ENCODE measurements at regions of chr12 and their contacts with region 1.

Region 1: DNA sequence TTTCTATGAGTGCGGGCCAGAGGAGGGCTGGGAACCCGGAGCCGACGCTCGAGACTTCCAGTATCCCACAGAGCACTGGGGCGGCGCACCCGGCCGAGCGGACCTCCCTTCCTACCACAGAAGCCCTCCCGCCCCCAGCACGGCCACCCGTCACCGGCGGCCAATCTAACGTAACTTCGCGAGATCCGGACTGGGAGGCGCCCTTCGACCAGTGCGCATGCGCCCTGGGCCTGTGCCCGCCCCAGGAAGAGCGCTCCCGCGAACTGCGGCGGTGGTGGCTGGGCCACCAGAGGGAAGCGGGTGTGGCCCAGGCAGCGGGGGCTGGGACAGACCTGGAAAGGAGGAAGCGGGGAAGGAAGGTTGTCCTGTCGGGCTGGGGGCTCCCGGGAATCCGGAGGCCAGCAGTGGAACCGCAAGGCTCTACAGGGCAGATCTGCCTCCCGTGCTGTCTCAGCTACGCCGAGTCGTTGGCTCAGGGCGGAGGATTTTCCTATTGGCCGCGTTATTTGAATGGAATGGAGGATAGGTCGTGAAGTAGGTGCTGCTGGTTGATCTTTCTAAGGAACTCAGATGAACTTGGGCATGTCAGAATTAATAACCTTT is at the start of gene PPP1R12A:
- DNase-seq: peak; percentile 98
- H3K4me3 ChIP-seq: peak within 1 kb of the TSS; percentile 81 to 96 (median 92)
- H3K27ac ChIP-seq: peak within 1 kb of the TSS; percentile 98 to 99 (median 99)
- H3K4me1 ChIP-seq: peaks cover 0 to 44% (median 26%) of the 10 kb centered on the region in 4 donors
- H3K27me3 ChIP-seq: no peaks in the 10 kb centered on the region
- CTCF ChIP-seq: peak in 2 of 4 experiments; percentile 22 to 31
- EP300 ChIP-seq: no peak
- POLR2A ChIP-seq: peak; percentile 99
- total RNA-seq, gene PPP1R12A: 326 to 528 (median 393) TPM

Region 2: GRCh38 chr12:79776111-79776510 is 159.0 kb before region 1 on chr12:
- intact Hi-C with region 1: loop called (anchors 5 kb)
- DNase-seq: no peak
- H3K4me3 ChIP-seq: no peak overlapping the region
- H3K27ac ChIP-seq: peak overlapping the region in 3 of 4 donors; percentile 4 to 40 (median 29)
- H3K4me1 ChIP-seq: peaks cover 0 to 24% (median 11%) of the 10 kb centered on the region in 4 donors
- H3K27me3 ChIP-seq: no peaks in the 10 kb centered on the region
- CTCF ChIP-seq: no peak
- EP300 ChIP-seq: no peak
- POLR2A ChIP-seq: no peak

Region 3: DNA sequence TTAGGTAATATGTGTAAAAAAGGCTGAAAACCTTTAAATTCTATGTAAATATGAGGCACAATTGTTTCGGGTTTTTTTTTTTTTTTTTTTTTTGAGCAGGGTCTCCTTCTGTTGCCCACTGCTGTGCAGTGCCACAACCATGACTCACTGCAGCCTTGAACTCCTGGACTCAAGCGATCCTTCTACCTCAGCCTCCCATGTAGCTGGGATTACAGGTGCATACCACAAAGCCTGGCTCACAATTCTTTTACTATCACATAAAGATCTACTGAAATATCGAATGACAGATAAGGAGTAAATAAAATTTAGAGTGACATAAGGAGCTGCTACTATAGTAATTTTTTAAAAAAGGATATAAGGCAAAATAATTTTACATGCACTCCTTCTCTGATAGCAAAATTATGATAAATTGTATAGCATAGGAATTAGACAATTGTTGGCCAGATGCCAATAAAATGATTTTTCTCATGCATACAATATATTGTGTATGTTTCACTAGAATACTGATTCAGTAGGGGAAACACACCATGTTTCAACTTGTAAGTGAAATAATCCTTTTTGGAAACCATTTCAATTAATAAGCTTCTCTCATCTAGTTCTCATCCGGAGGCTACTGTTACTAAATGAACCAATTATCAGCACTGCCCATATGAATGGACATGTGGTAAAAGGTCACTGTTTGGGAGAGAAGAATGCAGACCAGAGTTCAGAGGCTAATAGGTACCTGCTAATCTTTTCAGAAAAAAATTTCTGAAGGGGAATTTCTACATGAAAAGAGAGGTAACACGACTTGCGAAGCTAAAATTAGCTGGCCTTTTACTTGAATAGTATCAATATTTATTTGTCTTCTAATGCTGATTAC is 108.6 kb before region 1 on chr12:
- intact Hi-C with region 1: loop called (anchors 10 kb)
- DNase-seq: no peak
- H3K4me3 ChIP-seq: no peak overlapping the region
- H3K27ac ChIP-seq: no peak overlapping the region
- H3K4me1 ChIP-seq: peaks cover 0 to 72% (median 26%) of the 10 kb centered on the region in 4 donors
- H3K27me3 ChIP-seq: no peaks in the 10 kb centered on the region
- CTCF ChIP-seq: no peak
- EP300 ChIP-seq: no peak
- POLR2A ChIP-seq: no peak

Region 4: DNA sequence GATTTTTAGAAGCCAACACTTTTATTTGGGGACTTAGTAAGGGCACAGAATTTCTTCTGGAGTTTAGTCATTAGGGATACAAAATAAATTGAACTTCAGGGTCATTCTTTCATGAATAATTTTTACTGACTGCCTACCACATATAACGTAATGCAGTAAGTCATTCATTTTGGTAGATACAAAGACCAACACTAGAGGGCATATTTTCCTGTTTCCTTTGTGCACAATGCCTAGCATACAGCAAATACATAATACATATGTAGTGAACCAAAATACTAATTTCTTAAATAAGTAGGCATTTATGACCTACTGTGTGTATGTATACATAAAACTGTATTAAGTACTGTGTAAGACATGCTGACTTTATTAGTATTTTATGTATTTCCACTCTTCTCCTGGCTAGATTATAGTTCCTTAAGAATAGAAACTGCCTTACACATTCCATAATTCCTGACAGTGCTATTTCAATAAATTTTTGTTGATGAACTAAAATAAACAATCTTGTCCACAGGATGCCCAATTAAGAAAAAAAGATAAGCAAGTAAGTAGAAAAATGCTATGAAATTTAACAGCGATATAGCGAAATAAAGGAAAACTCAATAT is 48.1 kb before region 1 on chr12:
- intact Hi-C with region 1: loop called (anchors 5 kb)
- DNase-seq: no peak
- H3K4me3 ChIP-seq: no peak overlapping the region
- H3K27ac ChIP-seq: peak overlapping the region in 2 of 4 donors; percentile 36 to 49
- H3K4me1 ChIP-seq: peaks cover 0 to 97% (median 77%) of the 10 kb centered on the region in 4 donors
- H3K27me3 ChIP-seq: no peaks in the 10 kb centered on the region
- CTCF ChIP-seq: peak; percentile 22 to 47 (median 30)
- EP300 ChIP-seq: no peak
- POLR2A ChIP-seq: no peak

Region 5: DNA sequence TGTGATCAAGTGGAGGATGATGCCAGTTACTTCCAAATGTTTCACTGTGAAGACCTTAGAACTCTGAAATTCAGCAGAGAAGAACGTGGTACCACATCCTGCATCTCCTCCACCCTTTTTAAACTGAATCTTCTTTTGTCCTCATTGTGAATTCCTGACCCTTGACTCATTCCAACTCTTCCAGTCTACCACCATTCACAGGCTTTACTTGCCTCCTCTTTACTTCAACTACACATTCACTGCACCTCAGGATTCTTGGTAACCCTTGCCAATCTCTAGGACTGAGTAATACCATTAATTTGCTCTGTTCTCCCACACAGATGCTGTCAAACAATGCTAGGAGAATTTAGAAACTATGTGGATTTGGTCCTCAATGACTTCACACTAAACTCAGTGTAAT is 37.5 kb before region 1 on chr12:
- intact Hi-C with region 1: no loop called
- DNase-seq: no peak
- H3K4me3 ChIP-seq: no peak overlapping the region
- H3K27ac ChIP-seq: no peak overlapping the region
- H3K4me1 ChIP-seq: peaks cover 0 to 93% (median 71%) of the 10 kb centered on the region in 4 donors
- H3K27me3 ChIP-seq: no peaks in the 10 kb centered on the region
- CTCF ChIP-seq: no peak
- EP300 ChIP-seq: no peak
- POLR2A ChIP-seq: no peak

Region 6: GRCh38 chr12:80041692-80042091 is 106.6 kb after region 1 on chr12:
- intact Hi-C with region 1: loop called (anchors 2 kb)
- DNase-seq: no peak
- H3K4me3 ChIP-seq: no peak overlapping the region
- H3K27ac ChIP-seq: peak overlapping the region; percentile 72 to 81 (median 80)
- H3K4me1 ChIP-seq: peaks cover 0 to 64% (median 37%) of the 10 kb centered on the region in 4 donors
- H3K27me3 ChIP-seq: no peaks in the 10 kb centered on the region
- CTCF ChIP-seq: no peak
- EP300 ChIP-seq: no peak
- POLR2A ChIP-seq: no peak

Region 7: GRCh38 chr12:80262346-80262745 is 327.2 kb after region 1 on chr12:
- intact Hi-C with region 1: no loop called
- DNase-seq: no peak
- H3K4me3 ChIP-seq: no peak overlapping the region
- H3K27ac ChIP-seq: no peak overlapping the region
- H3K4me1 ChIP-seq: no peaks in the 10 kb centered on the region
- H3K27me3 ChIP-seq: no peaks in the 10 kb centered on the region
- CTCF ChIP-seq: no peak
- EP300 ChIP-seq: no peak
- POLR2A ChIP-seq: no peak